ENCODE measurements at regions of chr11 and their contacts with region 1.

Region 1: GRCh38 chr11:10735481-10736475 is 15.3 kb upstream of the CTR9 start:
- DNase-seq: peak; percentile 70 to 89 (median 82)
- ATAC-seq: peak; percentile 100
- H3K4me3 Mint-ChIP-seq: peak overlapping the region; percentile 53 to 79 (median 61)
- H3K27ac Mint-ChIP-seq: peak overlapping the region in 5 of 10 donors; percentile 39 to 64 (median 49)
- H3K4me1 Mint-ChIP-seq: peaks cover 9 to 18% (median 10%) of the 10 kb centered on the region in 4 donors
- H3K27me3 Mint-ChIP-seq: peaks cover 0 to 18% (median 11%) of the 10 kb centered on the region in 5 donors

Region 2: DNA sequence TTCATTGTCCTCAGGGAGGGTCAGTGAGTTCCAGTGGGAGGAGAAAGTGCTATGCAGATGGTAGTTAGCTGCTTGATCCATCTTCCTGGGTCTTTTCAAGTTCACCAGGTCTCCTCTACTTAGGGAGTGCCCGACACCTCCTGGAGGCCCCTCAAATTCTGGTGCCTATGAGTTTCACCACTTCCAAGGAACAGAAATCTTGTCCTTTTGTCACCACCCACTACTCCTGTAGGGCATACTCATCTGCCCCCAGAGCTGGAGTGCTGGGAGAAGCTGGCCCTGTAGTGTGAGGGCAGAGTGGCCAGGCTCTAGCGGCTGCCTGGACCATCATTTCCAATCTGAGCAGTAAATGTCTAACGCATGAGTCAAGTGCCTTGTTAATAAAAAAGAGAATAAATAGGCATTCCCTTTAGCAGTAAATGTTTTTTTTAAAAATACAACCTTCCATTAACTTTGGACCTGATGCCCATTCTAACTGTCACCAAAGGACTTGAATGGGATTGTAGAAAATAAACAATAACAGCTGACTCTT is 54.8 kb before region 1 on chr11:
- POLR2A ChIA-PET with region 1: no interaction called
- DNase-seq: no peak
- ATAC-seq: no peak
- H3K4me3 Mint-ChIP-seq: no peak overlapping the region
- H3K27ac Mint-ChIP-seq: no peak overlapping the region
- H3K4me1 Mint-ChIP-seq: no peaks in the 10 kb centered on the region
- H3K27me3 Mint-ChIP-seq: peaks cover 21 to 40% (median 28%) of the 10 kb centered on the region in 5 donors

Region 3: GRCh38 chr11:10824888-10825287 is 89.1 kb after region 1 on chr11:
- POLR2A ChIA-PET with region 1: interaction called, 12 read pairs
- DNase-seq: no peak
- ATAC-seq: peak in 1 of 2 donors; percentile 73
- H3K4me3 Mint-ChIP-seq: peak overlapping the region in 6 of 10 donors; percentile 0 to 38 (median 14)
- H3K27ac Mint-ChIP-seq: peak overlapping the region in 7 of 10 donors; percentile 1 to 77 (median 40)
- H3K4me1 Mint-ChIP-seq: peaks cover 9 to 22% (median 13%) of the 10 kb centered on the region in 4 donors
- H3K27me3 Mint-ChIP-seq: peaks cover 0 to 3% (median 0%) of the 10 kb centered on the region in 5 donors